ENCODE measurements at regions of chr1 and their contacts with region 1.

Region 1: GRCh38 chr1:202915146-202915545 is 11.9 kb downstream of the KLHL12 start:
- DNase-seq: no peak

Region 2: DNA sequence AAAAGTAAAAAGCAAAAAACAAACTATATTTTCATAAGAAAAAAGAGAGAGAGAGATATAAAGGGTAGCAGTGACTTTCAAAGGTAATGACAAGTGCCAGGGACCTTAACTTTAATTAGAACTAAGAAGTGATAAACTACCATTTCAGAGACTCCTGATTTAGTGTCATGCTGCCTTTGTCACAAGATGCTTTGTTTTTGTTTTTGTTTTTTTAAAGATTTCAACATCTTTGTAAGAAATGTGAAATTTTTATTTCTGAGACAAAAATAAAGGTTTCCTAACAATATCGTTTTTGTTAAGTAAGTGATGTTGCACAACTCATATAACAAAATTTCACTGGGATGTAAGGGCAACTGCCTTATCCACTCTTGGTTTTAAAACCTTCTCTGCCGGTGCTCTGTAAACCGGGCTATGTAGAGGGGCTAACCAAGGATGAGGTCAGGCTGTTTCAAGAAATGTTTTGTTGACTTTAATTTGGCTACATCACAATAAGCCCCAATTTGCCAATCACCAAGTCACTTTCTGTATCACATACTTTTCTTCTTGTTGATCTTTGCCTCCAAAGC is 169.7 kb before region 1 on chr1:
- intact Hi-C with region 1: loop called in 1 of 2 experiments (anchors 10 kb)
- DNase-seq: no peak

Region 3: GRCh38 chr1:202861420-202862200 is 53.5 kb before region 1 on chr1:
- intact Hi-C with region 1: no loop called
- DNase-seq: peak; percentile 97

Region 4: GRCh38 chr1:202880961-202881460 is 34.1 kb before region 1 on chr1:
- intact Hi-C with region 1: no loop called
- DNase-seq: no peak

Region 5: GRCh38 chr1:202938287-202938925 is 23.3 kb after region 1 on chr1:
- intact Hi-C with region 1: no loop called
- DNase-seq: no peak

Region 6: GRCh38 chr1:203692565-203693470 is 777.7 kb after region 1 on chr1:
- intact Hi-C with region 1: loop called in 1 of 2 experiments (anchors 5 kb)
- DNase-seq: peak; percentile 95